ENCODE measurements at regions of chr6 and their contacts with region 1.

Region 1: GRCh38 chr6:25070547-25071366 is 135.0 kb upstream of the RIPOR2 start:
- DNase-seq: peak; percentile 68
- ATAC-seq: peak; percentile 94
- H3K4me3 ChIP-seq: no peak overlapping the region
- H3K27ac ChIP-seq: no peak overlapping the region
- H3K4me1 ChIP-seq: no peaks in the 10 kb centered on the region
- H3K27me3 ChIP-seq: 0 out of 5 replicates have a peak, but pooled peaks cover 0 to 3% of the 10 kb centered on the region in 2 experiments
- CTCF ChIP-seq: peak; percentile 90
- EP300 ChIP-seq: no peak
- POLR2A ChIP-seq: no peak
- RAD21 ChIP-seq: peak; percentile 87

Region 2: DNA sequence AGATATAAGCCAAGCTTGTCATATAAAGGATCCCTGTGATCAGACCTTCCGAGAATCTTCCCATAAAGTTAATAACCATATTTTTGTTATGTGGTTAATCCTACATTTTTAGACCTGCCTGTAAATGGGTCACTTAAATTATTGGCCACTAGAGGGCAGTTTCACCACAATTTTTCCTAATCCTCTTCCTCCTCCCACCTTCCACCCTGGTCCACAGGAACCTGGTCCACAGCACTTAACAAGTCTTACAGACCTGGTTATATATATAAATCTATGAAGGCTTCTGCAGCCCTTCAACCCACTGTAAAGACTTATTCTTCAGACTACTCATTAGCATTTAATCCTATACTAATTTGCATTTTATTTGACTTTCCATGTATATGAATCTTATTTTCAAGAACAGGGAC is 639.7 kb before region 1 on chr6:
- CTCF ChIA-PET with region 1: no interaction called
- POLR2A ChIA-PET with region 1: no interaction called
- in situ Hi-C with region 1: no loop called
- intact Hi-C with region 1: loop called (anchors 2 kb)
- DNase-seq: peak; percentile 65
- ATAC-seq: peak; percentile 82
- H3K4me3 ChIP-seq: no peak overlapping the region
- H3K27ac ChIP-seq: no peak overlapping the region
- H3K4me1 ChIP-seq: no peaks in the 10 kb centered on the region
- H3K27me3 ChIP-seq: no peaks in the 10 kb centered on the region
- CTCF ChIP-seq: peak; percentile 76
- EP300 ChIP-seq: no peak
- POLR2A ChIP-seq: no peak
- RAD21 ChIP-seq: peak; percentile 56; the same call in 1 of the 2 replicates

Region 3: DNA sequence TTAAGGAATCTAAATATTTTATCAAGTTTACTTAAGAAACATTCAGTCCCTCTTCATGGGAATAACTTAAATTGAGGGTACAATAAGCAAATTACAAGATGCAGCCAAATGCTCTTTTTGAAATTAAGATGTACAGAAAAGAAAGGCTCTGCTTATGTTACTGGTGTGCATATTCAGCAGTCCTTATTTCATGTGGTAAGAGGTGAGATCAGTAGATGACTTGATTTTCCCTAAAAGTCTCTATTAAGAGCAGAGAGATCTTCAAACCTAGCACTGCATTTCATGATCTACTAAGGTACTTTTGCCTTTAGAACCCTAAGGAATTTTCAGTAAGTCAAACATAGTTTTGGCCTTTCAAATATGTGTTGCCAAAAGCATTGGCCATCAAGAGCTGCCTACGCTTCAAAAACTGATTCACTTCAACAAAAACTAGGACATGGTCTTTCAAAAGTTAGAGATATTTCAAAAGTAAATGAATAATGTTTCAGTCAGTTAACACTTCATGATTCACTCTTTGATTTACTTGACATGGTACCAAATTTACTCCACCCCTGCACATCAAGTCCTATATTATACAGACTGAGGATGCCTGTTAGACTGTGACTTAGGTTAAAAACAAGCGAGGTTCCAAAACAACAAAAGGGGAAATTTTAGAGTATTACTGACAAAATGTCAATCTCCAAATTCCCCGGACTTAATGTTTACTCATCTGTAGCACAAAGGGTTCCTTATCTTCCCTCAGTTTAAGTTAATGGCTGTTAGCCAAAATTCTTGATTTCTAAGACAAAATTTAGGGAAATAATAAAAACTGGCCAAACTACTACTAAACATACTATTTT is 371.0 kb before region 1 on chr6:
- CTCF ChIA-PET with region 1: no interaction called
- POLR2A ChIA-PET with region 1: no interaction called
- in situ Hi-C with region 1: no loop called
- intact Hi-C with region 1: loop called (anchors 10 kb)
- DNase-seq: peak; percentile 21
- ATAC-seq: peak; percentile 5; the same call in 1 of the 3 replicates
- H3K4me3 ChIP-seq: no peak overlapping the region
- H3K27ac ChIP-seq: no peak overlapping the region
- H3K4me1 ChIP-seq: peaks cover 12% of the 10 kb centered on the region
- H3K27me3 ChIP-seq: no peaks in the 10 kb centered on the region
- CTCF ChIP-seq: no peak
- EP300 ChIP-seq: no peak
- POLR2A ChIP-seq: no peak
- RAD21 ChIP-seq: no peak

Region 4: GRCh38 chr6:24774696-24775519 is 295.8 kb before region 1 on chr6 and contains the start of gene GMNN:
- CTCF ChIA-PET with region 1: no interaction called
- POLR2A ChIA-PET with region 1: no interaction called
- in situ Hi-C with region 1: no loop called
- intact Hi-C with region 1: loop called (anchors 1 kb)
- DNase-seq: peak; percentile 96
- ATAC-seq: peak; percentile 95
- H3K4me3 ChIP-seq: peak within 1 kb of the TSS; percentile 78 to 100 (median 99)
- H3K27ac ChIP-seq: peak within 1 kb of the TSS; percentile 99
- H3K4me1 ChIP-seq: peaks cover 67% of the 10 kb centered on the region
- H3K27me3 ChIP-seq: no peaks in the 10 kb centered on the region; a peak in 1 of 5 replicates
- CTCF ChIP-seq: peak; percentile 27
- EP300 ChIP-seq: 0 out of 4 replicates have a peak, but pooled peaks of 1 of the 2 experiments have one; percentile 14
- POLR2A ChIP-seq: peak; percentile 96 to 98
- RAD21 ChIP-seq: peak; percentile 44
- total RNA-seq, gene GMNN: 154 and 228 TPM in 2 replicates

Region 5: GRCh38 chr6:24855395-24856245 is 215.1 kb before region 1 on chr6:
- CTCF ChIA-PET with region 1: interaction called, 17 read pairs
- POLR2A ChIA-PET with region 1: no interaction called
- in situ Hi-C with region 1: loop called (anchors 5 kb)
- intact Hi-C with region 1: loop called (anchors 1 kb)
- DNase-seq: peak; percentile 60
- ATAC-seq: peak; percentile 89
- H3K4me3 ChIP-seq: no peak overlapping the region
- H3K27ac ChIP-seq: no peak overlapping the region
- H3K4me1 ChIP-seq: peaks cover 5% of the 10 kb centered on the region; the same call in 1 of the 2 replicates
- H3K27me3 ChIP-seq: peaks cover 0 to 13% of the 10 kb centered on the region in 2 experiments; a peak in 3 of 5 replicates
- CTCF ChIP-seq: peak; percentile 87
- EP300 ChIP-seq: no peak
- POLR2A ChIP-seq: no peak
- RAD21 ChIP-seq: peak; percentile 71

Region 6: GRCh38 chr6:25053875-25054371 is 16.8 kb before region 1 on chr6:
- CTCF ChIA-PET with region 1: no interaction called
- POLR2A ChIA-PET with region 1: no interaction called
- in situ Hi-C with region 1: no loop called
- intact Hi-C with region 1: no loop called
- DNase-seq: no peak
- ATAC-seq: no peak
- H3K4me3 ChIP-seq: no peak overlapping the region
- H3K27ac ChIP-seq: no peak overlapping the region
- H3K4me1 ChIP-seq: no peaks in the 10 kb centered on the region
- H3K27me3 ChIP-seq: no peaks in the 10 kb centered on the region
- CTCF ChIP-seq: no peak
- EP300 ChIP-seq: no peak
- POLR2A ChIP-seq: no peak
- RAD21 ChIP-seq: no peak

Region 7: GRCh38 chr6:25181923-25182322 is 111.2 kb after region 1 on chr6:
- CTCF ChIA-PET with region 1: no interaction called
- POLR2A ChIA-PET with region 1: no interaction called
- in situ Hi-C with region 1: no loop called
- intact Hi-C with region 1: no loop called
- DNase-seq: no peak
- ATAC-seq: peak; percentile 49
- H3K4me3 ChIP-seq: no peak overlapping the region
- H3K27ac ChIP-seq: no peak overlapping the region
- H3K4me1 ChIP-seq: no peaks in the 10 kb centered on the region
- H3K27me3 ChIP-seq: no peaks in the 10 kb centered on the region
- CTCF ChIP-seq: no peak
- EP300 ChIP-seq: no peak
- POLR2A ChIP-seq: no peak
- RAD21 ChIP-seq: no peak

Region 8: GRCh38 chr6:25295651-25296050 is 224.9 kb after region 1 on chr6:
- CTCF ChIA-PET with region 1: no interaction called
- POLR2A ChIA-PET with region 1: no interaction called
- in situ Hi-C with region 1: no loop called
- intact Hi-C with region 1: no loop called
- DNase-seq: no peak
- ATAC-seq: no peak
- H3K4me3 ChIP-seq: no peak overlapping the region
- H3K27ac ChIP-seq: no peak overlapping the region
- H3K4me1 ChIP-seq: no peaks in the 10 kb centered on the region
- H3K27me3 ChIP-seq: no peaks in the 10 kb centered on the region
- CTCF ChIP-seq: no peak
- EP300 ChIP-seq: no peak
- POLR2A ChIP-seq: no peak
- RAD21 ChIP-seq: no peak

Region 9: GRCh38 chr6:25315194-25316177 is 244.7 kb after region 1 on chr6:
- CTCF ChIA-PET with region 1: no interaction called
- POLR2A ChIA-PET with region 1: no interaction called
- in situ Hi-C with region 1: no loop called
- intact Hi-C with region 1: no loop called
- DNase-seq: no peak
- ATAC-seq: no peak
- H3K4me3 ChIP-seq: no peak overlapping the region
- H3K27ac ChIP-seq: no peak overlapping the region
- H3K4me1 ChIP-seq: no peaks in the 10 kb centered on the region
- H3K27me3 ChIP-seq: no peaks in the 10 kb centered on the region
- CTCF ChIP-seq: no peak
- EP300 ChIP-seq: no peak
- POLR2A ChIP-seq: no peak
- RAD21 ChIP-seq: no peak